OCI-LY7 (cell line): ENCODE measurements at regions of chr20 and their contacts with region 1.

Region 1: GRCh38 chr20:60210779-60211617 is 252.8 kb downstream of the CDH26 start:
- DNase-seq: peak; percentile 55
- H3K4me3 ChIP-seq: no peak overlapping the region
- H3K27ac ChIP-seq: no peak overlapping the region
- H3K4me1 ChIP-seq: no peaks in the 10 kb centered on the region
- CTCF ChIP-seq: peak; percentile 87

Region 2: GRCh38 chr20:60057123-60057801 is 153.7 kb before region 1 on chr20:
- CTCF ChIA-PET with region 1: no interaction called
- POLR2A ChIA-PET with region 1: no interaction called
- intact Hi-C with region 1: loop called (anchors 2 kb)
- DNase-seq: peak; percentile 66
- H3K4me3 ChIP-seq: no peak overlapping the region
- H3K27ac ChIP-seq: no peak overlapping the region
- H3K4me1 ChIP-seq: peaks cover 9% of the 10 kb centered on the region
- CTCF ChIP-seq: peak; percentile 89

Region 3: DNA sequence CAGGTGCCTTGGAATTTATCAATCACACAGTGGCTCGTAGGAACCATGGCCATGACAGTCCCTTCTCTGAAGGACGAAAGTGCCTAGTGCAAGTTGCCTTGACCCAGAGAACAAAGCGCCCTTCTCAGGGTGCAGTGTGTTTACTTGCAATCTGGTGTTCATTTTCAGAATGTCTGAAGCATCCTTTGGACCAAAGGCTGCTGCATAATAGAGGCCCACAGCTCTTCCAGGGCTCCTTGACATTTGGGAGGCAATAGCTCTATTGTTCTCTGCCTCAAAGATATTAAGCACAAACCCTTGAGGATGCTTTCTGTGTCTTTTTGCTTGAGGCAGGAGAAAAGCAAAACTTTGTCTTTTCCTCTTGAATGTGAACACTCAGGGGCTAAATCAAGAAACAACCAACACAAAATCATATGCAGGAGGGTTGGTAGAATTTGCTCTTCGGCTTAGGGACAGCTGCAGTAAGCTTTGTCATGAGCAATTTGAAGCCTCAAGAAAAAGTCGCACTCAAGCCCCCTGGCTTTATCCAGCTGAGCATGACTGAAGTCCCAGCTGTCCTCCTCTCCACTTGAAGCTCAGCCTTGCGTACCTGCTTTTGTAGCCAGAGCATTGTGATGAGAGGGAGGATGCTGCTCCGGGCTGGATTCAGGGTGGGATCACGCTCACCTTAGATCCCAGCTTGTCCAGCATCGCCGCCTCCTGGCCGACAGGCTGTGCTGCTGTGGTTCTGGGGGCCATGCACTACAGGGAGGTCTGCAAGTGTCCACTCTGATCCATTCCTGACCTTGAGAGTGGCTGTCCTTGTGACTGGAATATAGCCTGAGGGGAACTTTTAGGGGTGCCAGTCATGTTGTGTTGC is 242.6 kb after region 1 on chr20:
- CTCF ChIA-PET with region 1: no interaction called
- POLR2A ChIA-PET with region 1: no interaction called
- intact Hi-C with region 1: loop called (anchors 10 kb)
- DNase-seq: peak; percentile 2
- H3K4me3 ChIP-seq: no peak overlapping the region
- H3K27ac ChIP-seq: no peak overlapping the region
- H3K4me1 ChIP-seq: no peaks in the 10 kb centered on the region
- CTCF ChIP-seq: peak; percentile 44